A549 (cell line): ENCODE measurements at regions of chr12 and their contacts with region 1.

Region 1: DNA sequence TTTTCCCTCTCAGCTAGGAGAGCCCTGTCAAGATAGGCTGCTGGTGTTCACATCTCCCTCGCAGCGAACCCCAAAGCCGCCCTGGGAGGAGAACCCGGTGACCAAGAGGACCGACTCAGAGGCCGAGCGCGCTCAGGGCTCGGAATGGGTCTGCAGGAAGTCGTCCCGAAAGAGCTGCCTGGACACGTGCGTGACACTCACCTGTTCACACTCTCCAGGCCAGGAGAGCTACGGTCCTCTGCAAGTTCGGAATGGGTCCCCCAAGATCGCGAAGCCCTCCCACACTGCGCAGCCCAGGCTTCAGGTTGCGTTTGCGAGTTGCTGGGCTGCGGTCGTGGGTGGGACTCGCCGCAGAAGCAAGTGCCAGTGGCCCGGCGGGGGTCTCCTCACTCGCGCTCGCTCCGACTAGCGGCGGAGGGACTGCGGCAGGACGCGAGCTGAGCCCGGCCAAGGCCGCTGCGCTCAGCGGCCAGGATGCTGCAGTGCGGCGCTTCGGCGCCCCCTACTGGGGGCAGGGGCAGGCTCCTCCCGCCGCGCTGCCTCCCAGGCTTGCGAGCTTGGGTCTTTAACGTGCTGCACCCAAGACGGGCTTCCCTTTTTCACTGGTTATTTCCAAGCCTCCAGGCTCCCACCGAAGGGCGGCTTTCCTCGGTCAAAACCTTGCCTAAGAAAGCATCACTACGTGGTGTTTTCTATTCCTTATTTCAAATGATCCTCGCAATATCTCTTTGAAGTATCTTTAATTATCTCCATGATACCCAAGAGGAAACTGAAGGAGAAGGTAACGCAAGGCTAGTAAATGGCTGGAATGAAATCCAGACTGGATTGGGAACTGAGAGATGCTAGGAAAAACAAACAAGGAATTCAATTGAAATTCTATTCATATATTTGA is at the start of gene RERG:
- DNase-seq: peak; percentile 57 to 78
- ATAC-seq: peak; percentile 100
- H3K4me3 ChIP-seq: peak within 1 kb of the TSS; percentile 47
- H3K27ac ChIP-seq: peak within 1 kb of the TSS; percentile 60 to 71
- H3K4me1 ChIP-seq: 0 out of 3 replicates have a peak, but pooled peaks cover 6% of the 10 kb centered on the region
- CTCF ChIP-seq: peak; percentile 96
- EP300 ChIP-seq: no peak
- POLR2A ChIP-seq: no peak
- RAD21 ChIP-seq: peak; percentile 87 to 98
- polyA plus RNA-seq, gene RERG: 0.44 and 0.48 TPM in 2 replicates

Region 2: DNA sequence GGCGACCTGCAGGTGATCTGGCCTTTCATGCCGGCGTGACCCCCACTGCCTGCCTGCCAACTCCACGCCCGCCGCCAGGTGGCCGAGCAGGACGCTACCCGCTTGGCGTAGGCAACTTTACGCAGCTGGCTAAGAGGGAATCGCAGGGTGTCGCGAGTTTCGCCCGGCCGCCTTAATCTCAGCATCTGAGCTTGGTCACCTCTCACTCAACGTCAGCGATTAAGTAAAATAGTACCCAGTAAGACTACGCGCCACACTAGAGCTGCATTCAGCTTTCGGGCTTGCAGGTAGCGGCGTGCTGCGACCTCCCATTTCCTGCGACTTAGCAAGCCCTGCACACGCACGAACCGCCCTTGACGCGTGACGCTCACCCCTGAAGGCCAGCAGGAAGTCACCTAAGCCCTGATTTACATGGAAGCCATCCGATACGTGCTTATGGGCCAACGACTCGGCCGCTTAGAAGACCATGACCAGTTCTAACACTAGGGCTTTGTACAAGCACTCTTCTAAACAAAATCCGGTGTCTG is 451.2 kb before region 1 on chr12:
- CTCF ChIA-PET with region 1: interaction called, 11 read pairs
- POLR2A ChIA-PET with region 1: interaction called, 5 read pairs
- DNase-seq: peak; percentile 69 to 92
- ATAC-seq: peak; percentile 65 to 72
- H3K4me3 ChIP-seq: peak overlapping the region; percentile 79
- H3K27ac ChIP-seq: peak overlapping the region; percentile 88 to 97
- H3K4me1 ChIP-seq: peaks cover 18% of the 10 kb centered on the region
- CTCF ChIP-seq: peak; percentile 58
- EP300 ChIP-seq: no peak
- POLR2A ChIP-seq: peak; percentile 84; the same call in 1 of the 2 replicates
- RAD21 ChIP-seq: peak; percentile 31 to 33; a peak in 4 of 5 replicates

Region 3: DNA sequence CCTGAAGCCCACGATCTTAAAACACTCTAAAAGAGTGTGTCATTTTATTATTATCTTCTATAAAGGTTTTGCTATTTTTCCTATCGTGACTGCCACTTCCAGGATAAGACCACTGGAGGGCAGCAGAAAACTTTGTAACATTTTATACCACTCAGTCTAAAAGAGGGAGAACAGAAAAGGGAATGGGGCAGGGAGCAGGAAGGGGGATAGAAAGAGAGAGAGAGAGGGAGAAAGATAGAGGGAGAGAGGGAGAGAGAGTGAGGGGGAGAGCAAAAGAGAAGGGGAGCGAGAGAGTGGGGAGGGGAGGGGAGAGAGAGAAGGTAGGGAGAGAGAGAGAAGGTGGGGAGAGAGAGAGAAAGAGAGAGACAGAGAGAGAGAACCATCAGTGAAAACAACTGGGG is 375.9 kb before region 1 on chr12:
- CTCF ChIA-PET with region 1: interaction called, 18 read pairs
- POLR2A ChIA-PET with region 1: no interaction called
- DNase-seq: peak; percentile 58 to 64
- ATAC-seq: peak; percentile 81 to 83; a peak in 5 of 6 replicates
- H3K4me3 ChIP-seq: no peak overlapping the region
- H3K27ac ChIP-seq: peak overlapping the region in 1 of 2 experiments; percentile 52; a peak in 3 of 6 replicates
- H3K4me1 ChIP-seq: peaks cover 44% of the 10 kb centered on the region
- CTCF ChIP-seq: peak; percentile 73
- EP300 ChIP-seq: no peak
- POLR2A ChIP-seq: no peak
- RAD21 ChIP-seq: peak; percentile 88 to 92

Region 4: DNA sequence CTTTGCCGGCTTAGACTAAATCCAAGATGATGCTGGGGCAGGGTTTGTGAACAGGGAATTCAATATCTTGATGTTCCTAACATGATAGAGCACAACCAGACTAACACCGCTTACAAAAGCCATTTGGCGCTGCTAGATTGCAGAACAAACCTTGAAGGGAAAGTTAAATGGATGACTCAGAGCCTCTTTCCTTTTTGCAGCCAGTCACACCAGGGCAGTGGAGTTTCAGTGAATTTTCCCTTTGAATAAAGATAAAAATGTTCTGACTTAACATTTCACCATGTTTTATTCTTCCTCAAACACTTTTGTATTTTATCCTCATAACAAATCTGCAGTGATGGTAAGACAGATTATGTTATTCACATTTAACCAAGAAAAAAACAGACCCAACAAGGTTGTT is 201.1 kb before region 1 on chr12:
- CTCF ChIA-PET with region 1: no interaction called
- POLR2A ChIA-PET with region 1: no interaction called
- DNase-seq: no peak
- ATAC-seq: no peak
- H3K4me3 ChIP-seq: no peak overlapping the region
- H3K27ac ChIP-seq: no peak overlapping the region
- H3K4me1 ChIP-seq: no peaks in the 10 kb centered on the region
- CTCF ChIP-seq: no peak
- EP300 ChIP-seq: no peak
- POLR2A ChIP-seq: no peak
- RAD21 ChIP-seq: no peak

Region 5: GRCh38 chr12:15181017-15181683 is 40.1 kb before region 1 on chr12:
- CTCF ChIA-PET with region 1: interaction called, 13 read pairs
- POLR2A ChIA-PET with region 1: no interaction called
- DNase-seq: no peak
- ATAC-seq: no peak
- H3K4me3 ChIP-seq: no peak overlapping the region
- H3K27ac ChIP-seq: no peak overlapping the region
- H3K4me1 ChIP-seq: no peaks in the 10 kb centered on the region
- CTCF ChIP-seq: no peak
- EP300 ChIP-seq: no peak
- POLR2A ChIP-seq: no peak
- RAD21 ChIP-seq: no peak

Region 6: DNA sequence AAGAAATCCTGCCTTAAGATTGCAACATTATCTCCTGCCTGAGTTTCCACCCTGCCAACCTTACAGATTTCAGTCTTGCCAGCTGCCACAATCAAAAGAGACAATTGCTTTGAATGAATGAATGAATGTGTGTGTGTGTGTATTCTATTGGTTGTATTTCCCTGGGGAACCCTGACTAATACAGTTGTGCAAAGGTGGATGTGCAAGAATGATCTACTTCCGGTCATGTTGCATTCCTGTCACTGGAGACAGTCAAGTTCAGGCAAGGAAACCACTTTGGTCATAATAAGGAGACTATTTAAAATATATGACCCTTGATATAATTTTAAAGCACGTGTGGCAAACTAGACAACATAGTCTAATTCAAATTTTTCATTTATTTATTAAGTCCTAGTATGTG is 13.1 kb before region 1 on chr12:
- CTCF ChIA-PET with region 1: interaction called, 31 read pairs
- POLR2A ChIA-PET with region 1: no interaction called
- DNase-seq: peak in 1 of 2 experiments; percentile 30
- ATAC-seq: peak; percentile 53 to 74; a peak in 4 of 6 replicates
- H3K4me3 ChIP-seq: no peak overlapping the region
- H3K27ac ChIP-seq: no peak overlapping the region
- H3K4me1 ChIP-seq: peaks cover 19% of the 10 kb centered on the region
- CTCF ChIP-seq: 0 out of 3 replicates have a peak, but pooled peaks have one; percentile 7
- EP300 ChIP-seq: no peak
- POLR2A ChIP-seq: no peak
- RAD21 ChIP-seq: no peak

Region 7: GRCh38 chr12:15276088-15276698 is 55.0 kb after region 1 on chr12:
- CTCF ChIA-PET with region 1: interaction called, 14 read pairs
- POLR2A ChIA-PET with region 1: no interaction called
- DNase-seq: peak; percentile 46 to 48
- ATAC-seq: peak; percentile 65 to 91; a peak in 5 of 6 replicates
- H3K4me3 ChIP-seq: no peak overlapping the region
- H3K27ac ChIP-seq: no peak overlapping the region; a peak in 1 of 6 replicates
- H3K4me1 ChIP-seq: peaks cover 15% of the 10 kb centered on the region; the same call in 2 of the 3 replicates
- CTCF ChIP-seq: peak; percentile 76
- EP300 ChIP-seq: no peak
- POLR2A ChIP-seq: no peak
- RAD21 ChIP-seq: peak; percentile 73 to 84